ENCODE measurements at regions of chr9 and their contacts with region 1.

Region 1: GRCh38 chr9:131502781-131503625 is at the start of gene POMT1:
- DNase-seq: peak; percentile 89
- H3K4me3 Mint-ChIP-seq: peak within 1 kb of the TSS; percentile 98
- H3K27ac Mint-ChIP-seq: peak within 1 kb of the TSS; percentile 77
- H3K4me1 Mint-ChIP-seq: peaks cover 50% of the 10 kb centered on the region
- H3K27me3 Mint-ChIP-seq: no peaks in the 10 kb centered on the region
- total RNA-seq, gene POMT1: 28.7 to 33.8 TPM

Region 2: GRCh38 chr9:130847327-130848217 is 655.4 kb before region 1 on chr9:
- CTCF ChIA-PET with region 1: no interaction called
- intact Hi-C with region 1: no loop called
- DNase-seq: no peak
- H3K4me3 Mint-ChIP-seq: no peak overlapping the region
- H3K27ac Mint-ChIP-seq: no peak overlapping the region
- H3K4me1 Mint-ChIP-seq: peaks cover 4% of the 10 kb centered on the region
- H3K27me3 Mint-ChIP-seq: no peaks in the 10 kb centered on the region

Region 3: GRCh38 chr9:131125128-131126058 is 377.6 kb before region 1 on chr9 and contains the start of gene NUP214:
- CTCF ChIA-PET with region 1: no interaction called
- intact Hi-C with region 1: loop called (anchors 2 kb)
- DNase-seq: peak; percentile 100
- H3K4me3 Mint-ChIP-seq: peak within 1 kb of the TSS; percentile 96
- H3K27ac Mint-ChIP-seq: peak within 1 kb of the TSS; percentile 92
- H3K4me1 Mint-ChIP-seq: peaks cover 32% of the 10 kb centered on the region
- H3K27me3 Mint-ChIP-seq: no peaks in the 10 kb centered on the region
- total RNA-seq, gene NUP214: 40.2 to 41.1 TPM

Region 4: DNA sequence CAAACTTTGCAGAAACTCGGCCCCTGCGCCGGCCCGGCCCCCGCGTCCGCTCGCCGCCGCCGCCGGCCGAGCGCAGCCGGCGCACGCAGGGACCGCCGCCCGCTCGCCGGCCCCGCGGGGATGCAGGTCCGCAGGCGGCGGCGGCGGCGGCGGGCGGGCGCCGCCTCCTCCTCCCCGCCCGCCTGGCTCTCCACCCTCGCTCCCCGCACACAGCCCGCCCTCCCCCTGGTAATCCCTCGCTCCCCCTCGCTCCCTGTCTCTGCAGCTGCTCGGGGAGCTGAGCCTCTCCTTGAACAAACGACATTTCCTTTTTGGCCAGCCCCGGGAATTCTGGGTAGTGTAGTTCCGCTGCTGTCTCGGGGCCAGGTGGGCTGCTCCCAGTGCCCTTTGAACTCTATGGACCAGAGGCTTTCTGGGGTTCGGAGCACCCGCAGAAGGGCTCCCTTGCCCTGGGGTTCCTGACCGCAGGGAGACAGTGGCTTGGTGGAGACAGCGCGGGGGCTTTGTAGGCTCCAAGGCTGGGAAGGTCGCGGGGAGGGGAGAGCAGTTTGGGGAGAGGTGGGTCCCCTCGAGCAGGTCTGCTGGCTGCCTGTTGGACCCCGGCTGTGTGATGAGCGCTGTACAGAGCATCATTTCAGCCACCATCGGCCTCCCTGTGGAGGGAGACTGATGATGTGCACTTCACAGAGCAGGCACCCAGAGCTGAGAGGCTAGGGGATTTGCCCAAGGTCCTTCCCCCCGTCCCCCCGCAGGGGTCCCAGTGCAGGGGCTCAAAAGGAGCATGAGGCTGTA is 224.9 kb before region 1 on chr9:
- CTCF ChIA-PET with region 1: no interaction called
- intact Hi-C with region 1: loop called (anchors 5 kb)
- DNase-seq: peak; percentile 86
- H3K4me3 Mint-ChIP-seq: peak overlapping the region; percentile 76
- H3K27ac Mint-ChIP-seq: peak overlapping the region; percentile 67
- H3K4me1 Mint-ChIP-seq: peaks cover 20% of the 10 kb centered on the region
- H3K27me3 Mint-ChIP-seq: peaks cover 4% of the 10 kb centered on the region

Region 5: GRCh38 chr9:131393622-131394463 is 109.2 kb before region 1 on chr9 and contains the start of gene PRRC2B:
- CTCF ChIA-PET with region 1: interaction called, 5 read pairs
- intact Hi-C with region 1: loop called (anchors 1 kb)
- DNase-seq: peak; percentile 87
- H3K4me3 Mint-ChIP-seq: peak within 1 kb of the TSS; percentile 89
- H3K27ac Mint-ChIP-seq: peak within 1 kb of the TSS; percentile 93
- H3K4me1 Mint-ChIP-seq: peaks cover 43% of the 10 kb centered on the region
- H3K27me3 Mint-ChIP-seq: no peaks in the 10 kb centered on the region
- total RNA-seq, gene PRRC2B: 157 to 171 TPM

Region 6: GRCh38 chr9:131441441-131441840 is 61.6 kb before region 1 on chr9:
- CTCF ChIA-PET with region 1: no interaction called
- intact Hi-C with region 1: no loop called
- DNase-seq: no peak
- H3K4me3 Mint-ChIP-seq: no peak overlapping the region
- H3K27ac Mint-ChIP-seq: peak overlapping the region; percentile 20
- H3K4me1 Mint-ChIP-seq: no peaks in the 10 kb centered on the region
- H3K27me3 Mint-ChIP-seq: no peaks in the 10 kb centered on the region

Region 7: DNA sequence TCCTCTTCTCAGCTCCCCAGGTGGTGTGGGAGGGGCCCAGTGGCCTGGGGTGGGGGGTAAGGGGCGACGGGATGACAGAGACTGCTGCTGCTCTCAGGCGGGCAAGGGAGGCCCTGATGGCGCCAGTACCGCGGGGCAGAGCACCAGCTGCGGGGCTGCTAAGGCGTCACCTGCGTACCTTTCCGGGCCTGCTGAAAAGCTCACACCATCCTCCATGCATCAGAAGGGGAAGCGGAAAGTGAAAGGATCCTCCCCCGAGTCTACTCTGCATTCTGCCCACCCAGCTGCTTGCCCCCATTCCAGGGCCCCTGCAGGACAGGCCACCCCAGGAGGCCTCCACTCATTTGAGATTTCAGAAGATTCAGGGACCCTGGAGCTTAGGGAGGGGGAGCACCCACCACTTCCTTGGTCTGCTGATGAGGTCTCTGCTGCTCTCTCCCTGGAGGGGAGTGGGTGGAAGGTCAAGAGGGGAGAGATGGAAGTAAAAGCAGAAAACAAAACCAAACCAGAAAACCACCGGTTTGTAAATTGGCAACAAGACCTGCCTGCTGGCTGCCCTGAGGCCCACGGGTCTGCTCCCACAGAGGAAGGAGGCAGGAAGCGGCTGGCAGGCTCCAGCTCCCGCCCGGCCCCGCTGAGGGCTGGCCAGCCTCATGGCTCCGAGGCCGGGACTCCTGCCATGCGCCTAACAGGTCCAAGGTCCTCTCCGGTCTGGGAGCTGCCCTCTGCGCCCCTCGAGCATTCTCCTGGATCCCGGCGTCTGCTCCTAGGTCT is 75.9 kb after region 1 on chr9:
- CTCF ChIA-PET with region 1: no interaction called
- intact Hi-C with region 1: loop called (anchors 5 kb)
- DNase-seq: peak; percentile 68
- H3K4me3 Mint-ChIP-seq: peak overlapping the region; percentile 46
- H3K27ac Mint-ChIP-seq: peak overlapping the region; percentile 88
- H3K4me1 Mint-ChIP-seq: peaks cover 23% of the 10 kb centered on the region
- H3K27me3 Mint-ChIP-seq: no peaks in the 10 kb centered on the region

Region 8: DNA sequence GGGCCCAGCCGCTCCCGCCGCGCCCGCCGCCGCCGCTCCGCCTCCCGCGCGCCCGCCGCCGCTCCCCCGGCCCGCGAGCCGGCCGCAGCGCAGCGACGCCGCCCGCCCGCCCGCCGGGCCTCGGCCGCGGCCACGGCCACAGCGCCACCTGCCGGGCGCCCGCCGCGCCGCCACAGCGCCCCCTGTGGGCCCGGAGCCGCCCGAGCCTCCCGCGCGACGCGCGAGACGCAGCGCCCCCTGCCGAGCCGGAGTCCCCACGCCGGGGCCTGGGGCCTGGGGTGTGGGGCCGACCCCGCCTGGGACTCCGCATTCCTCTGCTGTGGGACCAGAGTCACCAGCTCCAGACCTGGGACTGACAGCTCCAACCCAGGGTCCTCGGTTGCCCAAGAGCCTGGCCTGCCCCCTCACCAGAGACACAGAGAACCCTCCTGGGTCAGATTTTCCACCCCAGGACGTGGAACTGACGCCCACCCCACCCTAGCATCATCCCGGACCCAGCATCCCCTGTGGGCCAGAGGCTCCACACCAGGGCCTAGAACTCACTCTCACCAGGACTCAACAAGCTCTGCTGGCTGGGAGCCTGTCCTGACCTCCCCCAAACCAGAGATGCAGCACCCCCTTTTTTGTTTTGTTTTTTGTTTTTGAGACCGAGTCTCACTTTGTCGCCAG is 237.1 kb after region 1 on chr9 and contains the start of gene RAPGEF1:
- CTCF ChIA-PET with region 1: interaction called, 6 read pairs
- intact Hi-C with region 1: loop called (anchors 5 kb)
- DNase-seq: peak; percentile 78
- H3K4me3 Mint-ChIP-seq: peak within 1 kb of the TSS; percentile 88
- H3K27ac Mint-ChIP-seq: peak within 1 kb of the TSS; percentile 88
- H3K4me1 Mint-ChIP-seq: peaks cover 59% of the 10 kb centered on the region
- H3K27me3 Mint-ChIP-seq: no peaks in the 10 kb centered on the region
- total RNA-seq, gene RAPGEF1: 55.9 to 59.9 TPM

Region 9: GRCh38 chr9:131755541-131756198 is 252.7 kb after region 1 on chr9:
- CTCF ChIA-PET with region 1: no interaction called
- intact Hi-C with region 1: no loop called
- DNase-seq: peak; percentile 94
- H3K4me3 Mint-ChIP-seq: no peak overlapping the region
- H3K27ac Mint-ChIP-seq: no peak overlapping the region
- H3K4me1 Mint-ChIP-seq: peaks cover 13% of the 10 kb centered on the region
- H3K27me3 Mint-ChIP-seq: no peaks in the 10 kb centered on the region

Region 10: GRCh38 chr9:131769356-131769755 is 266.4 kb after region 1 on chr9:
- CTCF ChIA-PET with region 1: no interaction called
- intact Hi-C with region 1: no loop called
- DNase-seq: no peak
- H3K4me3 Mint-ChIP-seq: no peak overlapping the region
- H3K27ac Mint-ChIP-seq: no peak overlapping the region
- H3K4me1 Mint-ChIP-seq: no peaks in the 10 kb centered on the region
- H3K27me3 Mint-ChIP-seq: peaks cover 11% of the 10 kb centered on the region